Left cardiac atrium (tissue), 4 donors: ENCODE measurements at regions of chr1 and their contacts with region 1.

Region 1: DNA sequence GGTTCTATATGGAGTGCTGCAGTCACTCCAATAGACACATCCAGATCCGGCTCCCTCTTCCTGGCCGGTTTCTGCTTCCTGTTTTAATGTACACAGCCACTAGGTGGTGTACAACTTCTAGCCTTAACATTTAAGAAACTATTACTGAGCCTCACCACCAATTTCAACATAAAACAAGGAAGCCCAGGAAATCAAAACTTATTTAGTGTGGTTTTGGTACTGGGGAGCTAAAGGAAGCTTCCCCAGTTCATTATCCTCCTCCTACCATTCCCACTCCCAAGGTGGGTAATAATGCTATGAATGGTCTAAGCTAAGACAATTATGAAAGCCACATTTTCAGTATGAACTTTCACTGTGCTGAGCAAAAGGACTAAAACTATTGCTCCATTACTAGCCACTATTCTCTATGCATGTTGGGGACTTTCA is 25.5 kb upstream of the MTMR11 start:
- DNase-seq: peak; percentile 39
- ATAC-seq: peak; percentile 76 to 88

Region 2: GRCh38 chr1:149917571-149918144 is 44.5 kb before region 1 on chr1 and contains the start of gene SV2A:
- intact Hi-C with region 1: no loop called
- DNase-seq: no peak
- ATAC-seq: peak; percentile 70 to 71
- total RNA-seq, gene SV2A: 0.71 to 1.5 TPM

Region 3: DNA sequence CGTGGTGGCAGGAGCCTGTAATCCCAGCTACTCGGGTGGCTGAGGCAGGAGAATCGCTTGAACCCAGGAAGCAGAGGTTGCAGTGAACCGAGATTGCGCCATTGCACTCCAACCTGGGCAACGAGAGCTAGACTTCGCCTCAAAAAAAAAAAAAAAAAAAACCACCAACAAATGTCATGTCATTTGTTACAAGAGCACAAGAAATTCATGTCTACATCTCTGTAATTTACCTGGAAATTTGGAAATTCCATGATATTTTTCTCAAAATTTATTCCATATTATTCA is 88.9 kb after region 1 on chr1:
- intact Hi-C with region 1: loop called (anchors 2 to 5 kb)
- DNase-seq: no peak
- ATAC-seq: no peak